ENCODE measurements at regions of chr3 and their contacts with region 1.

Region 1: GRCh38 chr3:33074217-33075067 is 22.5 kb downstream of the GLB1 start:
- DNase-seq: peak; percentile 43
- H3K4me3 ChIP-seq: no peak overlapping the region
- H3K27ac ChIP-seq: no peak overlapping the region
- H3K27me3 ChIP-seq: no peaks in the 10 kb centered on the region
- CTCF ChIP-seq: peak; percentile 97

Region 2: DNA sequence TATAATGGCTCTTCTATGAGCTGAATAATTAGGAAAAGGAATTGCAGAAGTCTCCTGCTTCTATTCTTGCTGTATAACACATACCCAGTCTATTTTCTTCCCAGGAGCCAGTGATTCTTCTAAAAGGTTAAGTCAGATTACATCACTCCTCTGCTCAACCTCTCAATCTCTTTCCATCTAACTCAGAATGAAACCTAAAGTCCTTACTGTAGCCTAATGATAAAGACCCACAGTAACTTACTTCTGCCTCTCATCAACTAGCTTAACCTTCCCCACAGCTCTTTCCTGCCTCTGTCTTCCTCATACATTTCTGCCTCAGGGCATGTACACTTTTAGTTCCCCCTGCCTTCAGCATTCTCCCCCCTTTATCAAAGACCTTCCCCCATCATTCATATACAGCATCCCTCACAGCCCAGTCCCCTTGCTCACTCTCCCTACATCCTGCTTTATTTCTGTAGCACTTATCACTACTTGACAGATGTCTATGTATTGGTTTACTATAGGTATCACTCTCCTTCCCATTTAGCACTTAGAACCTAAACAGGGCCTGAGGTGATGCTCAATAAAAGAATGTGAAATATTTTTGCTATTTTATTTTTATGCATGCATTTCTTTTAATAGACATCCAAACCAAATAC is 543.3 kb before region 1 on chr3:
- CTCF ChIA-PET with region 1: no interaction called
- POLR2A ChIA-PET with region 1: no interaction called
- DNase-seq: no peak
- H3K4me3 ChIP-seq: no peak overlapping the region
- H3K27ac ChIP-seq: no peak overlapping the region
- H3K27me3 ChIP-seq: no peaks in the 10 kb centered on the region
- CTCF ChIP-seq: no peak

Region 3: DNA sequence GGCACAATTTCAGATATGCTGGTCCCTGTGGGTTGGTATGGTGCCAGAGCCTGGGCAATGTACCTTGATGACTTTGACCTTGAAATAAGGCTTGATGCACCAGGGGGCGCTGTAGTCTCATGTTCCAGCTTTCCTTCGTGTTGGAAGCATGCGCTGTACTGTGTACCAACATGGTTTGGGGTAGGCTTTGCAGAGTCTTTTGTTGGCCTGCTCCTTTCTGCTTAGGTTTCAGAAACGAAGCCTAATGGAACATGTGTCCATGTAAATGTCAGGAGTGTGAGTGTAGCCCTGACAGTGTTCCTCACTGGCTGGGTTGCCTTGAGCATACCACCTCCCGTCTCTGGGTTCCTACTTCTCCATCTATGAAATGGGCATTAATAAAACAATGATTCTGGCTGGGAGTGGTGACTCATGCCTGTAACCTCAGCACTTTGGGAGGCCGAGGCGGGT is 126.6 kb before region 1 on chr3:
- CTCF ChIA-PET with region 1: interaction called, 181 read pairs
- POLR2A ChIA-PET with region 1: no interaction called
- DNase-seq: peak; percentile 51
- H3K4me3 ChIP-seq: no peak overlapping the region
- H3K27ac ChIP-seq: no peak overlapping the region
- H3K27me3 ChIP-seq: peaks cover 9% of the 10 kb centered on the region
- CTCF ChIP-seq: peak; percentile 84

Region 4: GRCh38 chr3:33023172-33024136 is 51.0 kb before region 1 on chr3:
- CTCF ChIA-PET with region 1: interaction called, 15 read pairs
- POLR2A ChIA-PET with region 1: no interaction called
- DNase-seq: no peak
- H3K4me3 ChIP-seq: no peak overlapping the region
- H3K27ac ChIP-seq: no peak overlapping the region
- H3K27me3 ChIP-seq: no peaks in the 10 kb centered on the region
- CTCF ChIP-seq: no peak

Region 5: GRCh38 chr3:33047842-33048834 is 26.3 kb before region 1 on chr3:
- CTCF ChIA-PET with region 1: interaction called, 15 read pairs
- POLR2A ChIA-PET with region 1: no interaction called
- DNase-seq: no peak
- H3K4me3 ChIP-seq: no peak overlapping the region
- H3K27ac ChIP-seq: no peak overlapping the region
- H3K27me3 ChIP-seq: no peaks in the 10 kb centered on the region
- CTCF ChIP-seq: no peak

Region 6: GRCh38 chr3:33096093-33096868 is 21.8 kb after region 1 on chr3:
- CTCF ChIA-PET with region 1: interaction called, 15 read pairs
- POLR2A ChIA-PET with region 1: no interaction called
- DNase-seq: no peak
- H3K4me3 ChIP-seq: peak overlapping the region; percentile 89
- H3K27ac ChIP-seq: no peak overlapping the region
- H3K27me3 ChIP-seq: no peaks in the 10 kb centered on the region
- CTCF ChIP-seq: no peak